AG04450 (cell line): ENCODE measurements at regions of chr12 and their contacts with region 1.

Region 1: GRCh38 chr12:119115296-119115905 is 63.3 kb upstream of the HSPB8 start:
- DNase-seq: peak; percentile 8
- H3K4me3 ChIP-seq: no peak overlapping the region
- H3K27ac ChIP-seq: no peak overlapping the region
- H3K27me3 ChIP-seq: no peaks in the 10 kb centered on the region
- CTCF ChIP-seq: peak; percentile 86

Region 2: DNA sequence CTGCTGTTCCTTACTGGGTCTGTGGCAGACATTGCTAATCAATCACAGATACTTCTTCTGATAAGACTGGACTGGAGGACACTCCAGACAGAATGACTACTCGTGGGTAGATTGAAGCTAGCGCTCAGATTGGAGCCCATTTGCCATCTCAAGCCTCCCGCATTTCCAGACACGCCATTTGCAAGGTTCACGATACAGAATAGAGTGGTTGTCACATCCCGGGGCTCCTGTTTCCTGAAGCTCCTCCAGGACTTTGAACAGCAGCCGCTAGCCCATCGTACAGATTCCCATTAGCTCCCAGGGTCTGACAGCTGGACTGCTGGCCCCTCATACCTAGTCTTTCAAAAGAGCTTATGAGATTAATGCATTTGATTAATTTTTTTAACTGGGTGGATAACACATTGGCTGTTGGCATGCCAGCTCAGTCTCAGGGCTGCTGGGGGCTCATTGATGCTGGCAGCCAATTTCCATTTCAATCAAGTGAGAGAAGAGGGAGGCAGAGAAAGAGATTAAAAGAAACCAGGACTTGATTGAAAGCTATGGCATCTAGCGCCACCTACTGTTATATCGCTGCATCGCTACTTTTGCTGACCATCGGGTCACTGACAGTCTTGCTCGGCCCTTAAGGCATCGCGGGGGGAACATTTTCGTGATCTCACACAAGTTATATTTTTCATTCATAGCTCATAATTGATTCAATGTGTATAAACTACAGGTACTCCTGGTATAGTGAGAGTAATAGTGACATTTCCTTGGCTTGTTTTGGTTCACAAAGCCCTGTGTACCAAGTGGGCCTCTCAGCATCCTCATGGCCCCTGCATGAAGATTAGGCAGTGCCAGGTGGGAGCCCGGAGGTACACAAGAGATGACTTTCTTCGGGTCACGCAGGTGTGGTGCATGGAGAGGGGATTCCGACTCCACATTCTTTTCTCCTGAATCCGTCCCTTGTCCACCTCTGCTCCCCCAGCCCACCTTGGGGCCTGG is 297.7 kb after region 1 on chr12:
- CTCF ChIA-PET with region 1: interaction called, 17 read pairs
- POLR2A ChIA-PET with region 1: no interaction called
- DNase-seq: peak; percentile 24
- H3K4me3 ChIP-seq: no peak overlapping the region
- H3K27ac ChIP-seq: no peak overlapping the region
- H3K27me3 ChIP-seq: no peaks in the 10 kb centered on the region
- CTCF ChIP-seq: peak; percentile 81

Region 3: GRCh38 chr12:119544765-119545625 is 429.6 kb after region 1 on chr12:
- CTCF ChIA-PET with region 1: interaction called, 10 read pairs
- POLR2A ChIA-PET with region 1: no interaction called
- DNase-seq: peak; percentile 49
- H3K4me3 ChIP-seq: no peak overlapping the region
- H3K27ac ChIP-seq: no peak overlapping the region
- H3K27me3 ChIP-seq: no peaks in the 10 kb centered on the region
- CTCF ChIP-seq: peak; percentile 87